GM10248 (cell line): ENCODE measurements at regions of chr18 and their contacts with region 1.

Region 1: DNA sequence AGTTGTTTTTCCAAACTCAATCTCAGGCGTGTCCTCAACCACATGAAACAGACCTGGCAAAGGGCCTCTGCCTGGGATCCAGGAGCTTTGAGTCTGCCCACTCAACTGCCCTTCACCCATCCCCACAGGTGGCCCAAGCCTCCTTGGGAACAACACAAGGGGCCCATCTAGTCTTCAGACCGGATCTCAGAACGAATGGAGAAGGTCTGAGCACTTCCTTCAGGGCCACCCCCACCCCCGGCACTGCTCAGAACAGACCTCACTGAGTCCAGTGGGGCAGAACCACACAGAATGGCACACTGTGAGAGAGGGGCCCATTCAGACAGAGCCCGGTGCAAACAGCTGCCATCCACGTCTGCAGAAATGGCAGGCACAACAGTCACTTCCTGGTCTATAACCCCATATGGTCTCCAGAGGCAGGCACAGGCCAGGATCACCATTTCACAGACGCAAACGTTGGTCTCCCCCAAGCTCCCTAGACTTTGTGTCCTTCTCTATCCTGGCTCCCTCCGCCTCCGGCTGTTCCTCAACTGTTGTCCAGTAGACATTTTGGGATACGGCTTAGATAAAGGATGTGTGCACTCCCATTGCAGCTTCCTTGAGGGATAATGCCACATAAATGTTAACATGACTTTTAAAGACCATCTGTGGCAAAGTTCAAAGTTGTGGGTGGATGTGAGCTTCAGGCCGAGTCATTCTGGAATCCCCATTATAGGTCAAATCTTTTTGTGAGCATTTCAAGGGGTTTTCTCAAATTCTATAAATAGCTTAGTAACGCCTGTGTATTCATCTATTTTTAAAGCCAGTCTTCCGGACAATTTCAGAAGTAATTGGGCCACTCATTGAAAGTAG is 149.7 kb downstream of the SMAD7 start:
- DNase-seq: peak; percentile 81
- CTCF ChIP-seq: no peak

Region 2: DNA sequence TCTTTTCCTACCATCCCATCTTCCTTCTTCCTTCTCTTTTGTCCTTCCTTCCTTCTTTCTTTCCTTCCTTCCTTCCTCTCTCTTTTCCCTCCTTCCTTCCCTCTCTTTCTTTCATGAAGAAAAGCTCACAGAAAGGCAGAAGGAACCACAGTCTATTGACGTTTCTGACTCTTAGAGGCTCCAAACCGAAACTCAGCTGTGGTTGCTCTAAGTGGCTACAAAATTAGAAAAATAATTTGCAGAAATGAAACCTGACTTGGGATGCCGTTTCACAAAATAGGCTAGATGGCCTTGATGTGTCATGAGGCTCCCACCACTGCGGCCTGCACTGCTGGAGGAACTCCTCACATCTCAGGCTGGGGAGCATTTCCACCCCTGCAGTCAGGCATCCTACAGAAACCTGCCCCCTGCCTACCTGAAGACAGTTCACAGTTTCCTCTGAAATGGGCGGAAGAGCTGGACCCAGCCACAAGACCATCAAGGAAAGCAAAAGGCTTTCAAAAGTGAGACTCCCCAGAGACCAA is 15.9 kb before region 1 on chr18:
- CTCF ChIA-PET with region 1: interaction called, 23 read pairs
- POLR2A ChIA-PET with region 1: no interaction called
- DNase-seq: peak; percentile 88
- CTCF ChIP-seq: no peak

Region 3: DNA sequence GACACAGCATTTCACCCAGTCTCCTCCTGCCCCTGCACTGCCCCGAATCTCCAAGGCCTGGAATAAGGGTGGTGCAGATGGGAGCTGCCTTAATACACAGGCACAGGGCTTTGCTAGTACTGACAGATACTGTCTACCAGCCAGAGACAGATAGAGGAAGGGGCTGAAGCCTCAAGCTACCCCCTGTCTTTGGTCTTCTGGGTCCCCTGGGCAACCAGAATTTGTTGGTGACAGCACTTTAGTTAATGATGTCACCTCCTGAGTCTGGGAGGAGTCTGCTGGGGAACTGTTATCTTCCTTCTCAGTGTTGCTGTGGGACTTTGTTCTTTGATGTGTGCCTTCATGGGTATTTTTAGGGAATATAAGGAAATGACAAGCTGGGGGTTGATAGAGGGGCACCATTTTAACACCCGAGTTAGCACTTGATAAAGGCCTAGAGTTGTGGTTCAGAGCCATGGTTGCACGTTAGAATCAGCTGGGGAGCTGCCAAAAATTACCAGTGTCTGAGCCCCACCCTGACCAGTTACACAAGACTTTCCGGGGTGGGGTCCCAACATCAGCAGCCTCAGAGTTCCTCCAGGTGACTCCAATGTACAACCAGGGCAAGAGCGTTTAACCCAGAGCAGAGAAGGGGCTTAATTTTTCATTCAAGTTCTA is 12.9 kb after region 1 on chr18:
- CTCF ChIA-PET with region 1: interaction called, 23 read pairs
- POLR2A ChIA-PET with region 1: interaction called, 5 read pairs
- DNase-seq: no peak
- CTCF ChIP-seq: no peak